Upper lobe of right lung (tissue), 1 donor: ENCODE measurements at regions of chr15 and their contacts with region 1.

Region 1: GRCh38 chr15:34370129-34370528 is 3.1 kb upstream of the LPCAT4 start:
- DNase-seq: no peak
- ATAC-seq: no peak
- H3K4me3 ChIP-seq: no peak overlapping the region
- H3K27ac ChIP-seq: no peak overlapping the region
- H3K4me1 ChIP-seq: peaks cover 9% of the 10 kb centered on the region
- H3K27me3 ChIP-seq: no peaks in the 10 kb centered on the region
- CTCF ChIP-seq: no peak

Region 2: DNA sequence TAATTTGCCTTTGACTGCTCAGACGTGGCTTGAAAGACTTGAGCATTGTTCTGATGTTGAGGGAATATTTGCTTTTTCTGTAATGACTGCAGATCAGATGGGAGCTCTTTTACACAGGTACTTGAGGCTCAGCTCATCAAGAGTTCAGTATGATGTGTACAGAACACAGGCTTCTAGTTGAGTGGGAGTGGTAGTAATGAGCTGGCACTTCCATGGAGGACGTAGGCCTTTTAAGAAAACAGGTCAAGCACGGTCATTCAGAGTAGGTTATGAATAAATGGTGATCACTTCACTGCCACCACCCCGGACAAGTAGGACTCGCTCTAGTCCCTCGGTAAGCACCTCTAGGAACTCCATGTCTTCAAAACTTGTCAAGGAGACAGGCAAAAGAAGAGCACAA is 136.5 kb before region 1 on chr15:
- intact Hi-C with region 1: loop called (anchors 5 kb)
- DNase-seq: no peak
- ATAC-seq: peak; percentile 96
- H3K4me3 ChIP-seq: no peak overlapping the region
- H3K27ac ChIP-seq: no peak overlapping the region
- H3K4me1 ChIP-seq: no peaks in the 10 kb centered on the region
- H3K27me3 ChIP-seq: no peaks in the 10 kb centered on the region
- CTCF ChIP-seq: no peak

Region 3: GRCh38 chr15:34259566-34259965 is 110.6 kb before region 1 on chr15:
- intact Hi-C with region 1: no loop called
- DNase-seq: no peak
- ATAC-seq: no peak
- H3K4me3 ChIP-seq: no peak overlapping the region
- H3K27ac ChIP-seq: no peak overlapping the region
- H3K4me1 ChIP-seq: no peaks in the 10 kb centered on the region
- H3K27me3 ChIP-seq: no peaks in the 10 kb centered on the region
- CTCF ChIP-seq: no peak

Region 4: GRCh38 chr15:34318277-34319079 is 51.7 kb before region 1 on chr15:
- intact Hi-C with region 1: loop called (anchors 10 kb)
- DNase-seq: no peak
- ATAC-seq: peak; percentile 99
- H3K4me3 ChIP-seq: peak overlapping the region; percentile 56
- H3K27ac ChIP-seq: peak overlapping the region; percentile 44
- H3K4me1 ChIP-seq: peaks cover 9% of the 10 kb centered on the region
- H3K27me3 ChIP-seq: no peaks in the 10 kb centered on the region
- CTCF ChIP-seq: no peak

Region 5: GRCh38 chr15:34587717-34588674 is 217.9 kb after region 1 on chr15:
- intact Hi-C with region 1: no loop called
- DNase-seq: no peak
- ATAC-seq: peak; percentile 74
- H3K4me3 ChIP-seq: peak overlapping the region; percentile 31
- H3K27ac ChIP-seq: no peak overlapping the region
- H3K4me1 ChIP-seq: peaks cover 6% of the 10 kb centered on the region
- H3K27me3 ChIP-seq: no peaks in the 10 kb centered on the region
- CTCF ChIP-seq: peak; percentile 81